Activated T-helper 1 cell treated with anti-CD3 and anti-CD28 coated beads, Interleukin-12 subunit alpha, Interleukin-12 subunit beta, Interleukin-2, Interleukin-4 antibody, amounts not matched to agents 30 ng/mL and 10 ng/mL and 1 ng/mL, durations not matched to agents 14 hours and 24 hours and 36 hours (primary cell): ENCODE measurements at regions of chr11 and their contacts with region 1.

Region 1: GRCh38 chr11:2885676-2886081 is at the start of gene CDKN1C:
- DNase-seq: peak; percentile 77
- H3K4me3 Mint-ChIP-seq: peak within 1 kb of the TSS; percentile 88
- H3K27ac Mint-ChIP-seq: peak within 1 kb of the TSS; percentile 58
- H3K4me1 Mint-ChIP-seq: no peaks in the 10 kb centered on the region
- H3K27me3 Mint-ChIP-seq: peaks cover 21% of the 10 kb centered on the region
- total RNA-seq, gene CDKN1C: 3.1 and 3.9 TPM in 2 replicates

Region 2: DNA sequence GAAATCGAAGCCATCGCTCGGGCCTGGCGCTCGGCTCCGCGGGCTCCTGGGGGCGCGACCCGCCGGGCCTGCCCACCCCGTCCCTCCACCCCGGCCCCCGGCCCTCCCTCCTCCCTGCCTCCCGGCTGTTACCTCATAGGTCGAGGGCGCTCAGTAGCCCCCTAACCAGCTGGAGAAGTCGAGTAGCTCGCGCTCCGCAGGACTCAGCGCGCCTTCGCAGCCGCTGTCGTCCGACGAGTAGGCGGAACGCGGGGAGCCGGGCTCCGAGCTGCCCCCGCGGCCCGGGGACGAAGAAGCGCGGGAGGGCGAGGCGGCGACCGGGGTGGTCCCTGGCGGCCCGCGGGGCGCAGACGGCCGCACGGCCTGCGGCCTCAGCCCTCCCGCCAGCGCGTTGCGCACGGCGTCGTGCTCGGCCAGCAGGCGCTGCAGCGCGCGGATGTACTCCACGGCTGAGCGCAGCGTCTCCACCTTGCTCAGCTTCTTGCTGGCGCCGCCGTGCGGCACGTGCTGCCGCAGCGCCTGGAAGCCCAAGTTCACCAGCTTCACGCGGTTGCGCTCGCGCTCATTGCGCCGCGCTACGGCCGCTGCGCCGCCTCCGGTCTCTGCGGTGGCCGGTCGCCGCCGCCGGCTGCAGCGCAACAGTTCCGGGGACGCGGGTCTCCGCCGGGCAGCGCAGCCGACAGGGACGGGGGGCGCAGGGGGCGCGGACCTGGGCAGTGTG is 615.9 kb before region 1 on chr11:
- intact Hi-C with region 1: loop called (anchors 2 kb)
- DNase-seq: peak; percentile 25
- H3K4me3 Mint-ChIP-seq: no peak overlapping the region
- H3K27ac Mint-ChIP-seq: no peak overlapping the region
- H3K4me1 Mint-ChIP-seq: peaks cover 16% of the 10 kb centered on the region
- H3K27me3 Mint-ChIP-seq: peaks cover 32% of the 10 kb centered on the region

Region 3: GRCh38 chr11:2428322-2428795 is 457.3 kb before region 1 on chr11:
- intact Hi-C with region 1: loop called (anchors 1 kb)
- DNase-seq: peak; percentile 67
- H3K4me3 Mint-ChIP-seq: no peak overlapping the region
- H3K27ac Mint-ChIP-seq: no peak overlapping the region
- H3K4me1 Mint-ChIP-seq: no peaks in the 10 kb centered on the region
- H3K27me3 Mint-ChIP-seq: no peaks in the 10 kb centered on the region

Region 4: DNA sequence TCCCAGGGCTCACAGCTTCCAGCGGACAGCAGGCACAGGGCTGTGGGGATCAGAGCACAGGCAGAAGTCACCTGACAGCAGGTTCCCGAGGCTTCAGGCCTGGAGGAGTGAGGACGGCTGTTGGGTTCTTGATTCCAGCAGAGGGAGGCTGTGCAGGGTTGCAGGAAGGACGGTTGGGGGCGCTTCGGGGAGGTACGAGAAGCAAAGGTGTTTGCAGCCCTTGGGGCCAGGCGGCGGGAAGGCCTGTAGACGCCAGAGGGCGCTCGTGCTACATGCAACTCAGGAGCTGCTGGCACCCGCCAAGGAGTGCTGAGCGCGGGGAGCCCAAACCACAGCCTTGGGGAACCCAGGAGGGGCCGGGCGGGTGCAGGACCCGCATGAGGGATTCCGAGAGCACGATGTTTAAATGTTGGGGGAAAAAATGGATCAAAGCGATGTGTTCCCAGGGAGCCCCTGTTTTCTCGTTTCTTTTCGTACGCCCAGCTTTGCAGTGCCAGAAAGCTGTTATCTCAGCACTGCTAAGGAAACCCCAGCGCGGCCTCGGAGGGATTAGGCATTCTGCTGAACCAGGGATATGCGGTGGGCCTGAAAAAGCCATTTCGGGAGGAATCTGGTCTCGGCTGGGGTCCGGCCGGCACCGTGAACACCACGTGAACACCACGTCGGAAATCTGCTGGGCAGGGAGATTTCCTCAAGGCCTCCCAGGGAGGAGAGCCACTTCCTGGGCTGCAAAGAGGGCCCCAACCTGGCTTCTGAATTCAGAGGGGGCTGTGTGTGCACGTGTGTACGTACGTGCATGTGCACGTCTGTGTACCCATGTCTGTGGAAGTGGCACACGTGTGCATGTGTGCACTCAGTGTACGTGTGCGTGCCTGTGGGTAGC is 352.7 kb before region 1 on chr11:
- intact Hi-C with region 1: loop called (anchors 1 kb)
- DNase-seq: peak; percentile 80
- H3K4me3 Mint-ChIP-seq: peak overlapping the region; percentile 69
- H3K27ac Mint-ChIP-seq: no peak overlapping the region
- H3K4me1 Mint-ChIP-seq: peaks cover 13% of the 10 kb centered on the region
- H3K27me3 Mint-ChIP-seq: peaks cover 2% of the 10 kb centered on the region

Region 5: DNA sequence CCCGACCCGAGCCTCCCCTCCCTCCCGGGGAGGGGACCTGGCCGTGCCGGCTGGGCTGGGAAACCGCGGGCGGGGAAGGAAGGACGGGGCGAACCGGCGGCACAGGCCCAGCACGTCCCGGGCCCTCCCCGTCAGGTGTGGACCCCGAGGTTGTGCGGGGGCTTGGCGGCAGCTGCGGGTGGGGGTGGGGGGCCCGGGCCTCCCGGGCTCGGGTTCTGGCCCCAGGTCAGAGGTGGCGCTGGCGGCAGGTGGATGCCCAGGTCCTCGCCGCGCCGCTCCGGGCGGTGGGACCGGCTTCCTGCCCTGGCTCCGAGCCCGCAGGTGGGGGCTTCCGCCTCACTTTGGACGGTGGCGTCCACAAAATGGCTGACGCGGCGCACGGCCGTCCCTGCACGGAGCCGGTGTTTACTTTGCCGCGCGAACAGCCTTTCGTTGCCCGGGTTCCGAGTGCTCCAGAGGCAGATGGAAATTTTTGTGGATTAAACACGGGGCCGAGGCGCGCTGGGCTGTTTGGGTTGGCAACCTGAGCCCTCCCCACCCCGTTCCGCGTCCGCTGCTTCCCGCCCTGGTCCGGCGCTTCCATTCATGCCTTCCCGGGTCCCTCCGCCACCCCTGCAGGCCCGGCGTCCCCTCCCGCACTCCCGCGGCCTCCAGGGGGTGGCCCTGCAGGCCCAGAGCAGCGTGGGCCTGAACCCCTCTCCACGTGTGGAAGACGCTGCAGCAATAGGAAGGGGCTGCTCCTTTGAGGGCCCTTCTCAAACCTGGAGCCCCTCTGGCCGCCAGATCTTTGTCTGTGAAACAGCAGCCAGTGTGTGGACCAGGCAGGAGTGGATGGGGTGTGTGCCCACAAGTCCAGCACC is 93.9 kb before region 1 on chr11:
- intact Hi-C with region 1: no loop called
- DNase-seq: no peak
- H3K4me3 Mint-ChIP-seq: peak overlapping the region; percentile 39
- H3K27ac Mint-ChIP-seq: no peak overlapping the region
- H3K4me1 Mint-ChIP-seq: no peaks in the 10 kb centered on the region
- H3K27me3 Mint-ChIP-seq: peaks cover 9% of the 10 kb centered on the region

Region 6: GRCh38 chr11:2901854-2902783 is 16.4 kb after region 1 on chr11:
- intact Hi-C with region 1: loop called (anchors 2 kb)
- DNase-seq: peak; percentile 93
- H3K4me3 Mint-ChIP-seq: peak overlapping the region; percentile 72
- H3K27ac Mint-ChIP-seq: no peak overlapping the region
- H3K4me1 Mint-ChIP-seq: peaks cover 41% of the 10 kb centered on the region
- H3K27me3 Mint-ChIP-seq: no peaks in the 10 kb centered on the region

Region 7: DNA sequence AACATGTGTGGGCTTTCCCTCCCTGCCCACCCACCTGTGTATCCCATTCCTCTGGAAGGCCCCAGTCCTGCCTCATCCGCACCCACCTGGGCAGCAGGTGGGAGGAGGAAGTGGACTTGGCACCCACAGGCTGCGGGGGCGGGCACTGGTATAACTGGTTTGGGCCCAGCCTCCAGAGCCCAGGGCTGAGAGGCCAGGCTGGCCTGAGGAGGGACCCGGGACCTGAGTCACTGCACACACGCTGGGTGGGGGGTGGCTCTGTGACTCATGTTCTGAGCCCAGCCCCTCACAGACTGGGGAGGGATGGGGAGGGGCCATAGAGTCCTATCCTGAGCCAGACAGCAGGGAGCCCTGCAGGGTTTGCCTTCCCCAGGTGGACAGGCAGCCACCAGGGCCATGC is 26.8 kb after region 1 on chr11:
- intact Hi-C with region 1: no loop called
- DNase-seq: no peak
- H3K4me3 Mint-ChIP-seq: no peak overlapping the region
- H3K27ac Mint-ChIP-seq: no peak overlapping the region
- H3K4me1 Mint-ChIP-seq: no peaks in the 10 kb centered on the region
- H3K27me3 Mint-ChIP-seq: no peaks in the 10 kb centered on the region

Region 8: GRCh38 chr11:3057069-3057963 is 171.6 kb after region 1 on chr11 and contains the start of gene CARS1:
- intact Hi-C with region 1: loop called (anchors 1 kb)
- DNase-seq: peak; percentile 93
- H3K4me3 Mint-ChIP-seq: peak within 1 kb of the TSS; percentile 90
- H3K27ac Mint-ChIP-seq: peak within 1 kb of the TSS; percentile 83
- H3K4me1 Mint-ChIP-seq: peaks cover 35% of the 10 kb centered on the region
- H3K27me3 Mint-ChIP-seq: peaks cover 3% of the 10 kb centered on the region
- total RNA-seq, gene CARS1: 60.5 and 63.6 TPM in 2 replicates